ENCODE measurements at regions of chr7 and their contacts with region 1.

Region 1: DNA sequence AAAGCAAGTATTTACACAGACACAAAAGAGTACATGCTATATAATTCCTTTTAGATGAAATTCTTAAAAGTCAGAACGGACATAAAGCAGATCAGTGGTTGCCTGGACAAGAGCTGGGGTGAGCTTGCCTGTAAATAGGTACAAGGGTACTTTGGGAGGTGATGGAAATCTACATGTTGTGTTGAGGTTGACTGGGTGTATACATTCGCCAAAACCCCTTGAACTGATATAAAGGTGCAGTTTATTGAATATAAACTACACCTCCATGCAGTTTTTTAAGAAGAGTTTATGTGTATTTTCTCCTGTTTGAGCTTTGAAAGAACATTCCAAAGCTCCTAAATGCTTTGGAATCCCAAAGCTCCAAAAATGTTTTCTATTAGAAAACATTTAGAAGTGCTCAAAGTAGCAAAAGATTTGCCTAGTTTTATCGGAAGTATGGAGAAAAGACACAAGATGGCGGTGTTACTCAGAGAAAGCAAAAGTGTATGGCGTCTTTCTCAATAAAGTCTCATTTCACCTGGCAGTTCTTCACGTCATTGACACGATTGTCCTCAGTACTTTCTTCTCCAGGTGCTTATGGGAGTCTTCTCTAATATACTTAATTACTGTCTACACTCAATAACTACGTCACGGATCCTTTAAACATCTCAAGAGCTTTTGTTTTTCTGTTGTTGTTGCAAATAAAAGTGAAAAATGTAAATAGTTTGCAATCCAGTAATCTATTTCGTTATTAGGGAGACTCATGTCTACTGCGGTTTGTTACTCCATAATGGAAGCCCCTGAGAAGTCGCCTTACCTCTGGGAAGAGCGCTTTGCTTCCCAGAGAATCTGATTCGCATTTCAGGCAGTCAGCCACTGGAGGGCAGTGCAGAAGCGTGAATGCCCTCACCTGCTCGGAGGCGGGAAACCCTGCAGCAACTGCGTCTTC is 14.7 kb upstream of the SEC61G start:
- DNase-seq: peak; percentile 88
- ATAC-seq: peak; percentile 99
- H3K4me3 ChIP-seq: peak overlapping the region; percentile 45
- H3K27ac ChIP-seq: peak overlapping the region; percentile 53
- H3K4me1 ChIP-seq: no peaks in the 10 kb centered on the region
- H3K27me3 ChIP-seq: peaks cover 1% of the 10 kb centered on the region
- CTCF ChIP-seq: peak; percentile 84

Region 2: GRCh38 chr7:54960517-54960916 is 186.8 kb after region 1 on chr7:
- intact Hi-C with region 1: no loop called
- DNase-seq: no peak
- ATAC-seq: no peak
- H3K4me3 ChIP-seq: no peak overlapping the region
- H3K27ac ChIP-seq: no peak overlapping the region
- H3K4me1 ChIP-seq: no peaks in the 10 kb centered on the region
- H3K27me3 ChIP-seq: no peaks in the 10 kb centered on the region
- CTCF ChIP-seq: no peak

Region 3: GRCh38 chr7:55237156-55237893 is 463.6 kb after region 1 on chr7:
- intact Hi-C with region 1: no loop called
- DNase-seq: no peak
- ATAC-seq: no peak
- H3K4me3 ChIP-seq: no peak overlapping the region
- H3K27ac ChIP-seq: no peak overlapping the region
- H3K4me1 ChIP-seq: no peaks in the 10 kb centered on the region
- H3K27me3 ChIP-seq: no peaks in the 10 kb centered on the region
- CTCF ChIP-seq: no peak

Region 4: DNA sequence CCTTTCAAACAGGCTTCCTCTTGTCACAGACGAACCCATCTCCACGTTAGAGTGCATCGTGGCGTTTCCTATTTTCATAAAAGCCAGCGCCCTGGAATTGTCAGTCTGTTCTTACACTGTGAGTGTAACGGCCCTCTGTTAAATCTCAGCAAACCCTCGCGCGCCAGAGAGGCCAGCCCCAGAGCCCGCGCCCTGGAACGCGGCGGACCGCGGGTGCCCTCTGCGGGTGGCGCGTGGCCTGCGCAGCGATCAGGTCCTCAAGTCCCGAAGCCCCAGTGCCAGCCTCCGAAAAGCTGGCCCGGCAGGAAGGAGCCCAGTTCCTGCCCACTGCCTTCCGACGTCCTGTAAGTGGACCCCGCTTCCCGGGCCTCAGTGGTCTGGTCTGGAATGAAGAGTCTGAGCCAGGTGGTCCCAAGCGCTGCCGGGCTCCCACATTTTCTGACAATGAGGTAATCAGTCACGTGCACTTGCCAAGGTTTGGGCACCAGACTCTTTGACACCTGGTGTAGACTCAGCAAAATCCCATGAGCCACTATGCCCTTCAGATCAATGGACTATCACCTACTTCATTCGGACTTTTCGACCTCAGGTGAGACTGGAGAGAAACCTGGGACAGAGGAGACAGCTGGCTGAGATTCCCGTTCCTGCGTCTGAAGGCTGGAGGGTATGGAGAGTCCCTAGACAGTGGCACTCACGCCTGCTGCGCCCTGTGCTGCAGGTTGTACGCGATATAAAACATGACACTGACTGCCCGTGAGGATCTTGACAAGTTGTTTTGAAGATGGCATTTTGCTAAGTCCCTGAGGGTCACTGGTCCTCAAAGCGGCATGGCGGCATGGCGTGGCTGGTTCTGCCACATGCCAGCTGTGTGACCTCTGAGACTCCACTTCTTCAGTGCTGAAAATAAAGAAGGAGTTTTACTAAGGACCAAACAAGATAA is 482.0 kb after region 1 on chr7:
- intact Hi-C with region 1: loop called (anchors 5 kb)
- DNase-seq: peak; percentile 89
- ATAC-seq: peak; percentile 94
- H3K4me3 ChIP-seq: peak overlapping the region; percentile 74
- H3K27ac ChIP-seq: no peak overlapping the region
- H3K4me1 ChIP-seq: peaks cover 7% of the 10 kb centered on the region
- H3K27me3 ChIP-seq: peaks cover 5% of the 10 kb centered on the region
- CTCF ChIP-seq: peak; percentile 86